Activated naive CD4-positive, alpha-beta T cell treated with anti-CD3 and anti-CD28 coated beads, Interleukin-2, amount 10 ng/mL, durations not matched to agents 7 days and 5 days (primary cell): ENCODE measurements at regions of chr1 and their contacts with region 1.

Region 1: GRCh38 chr1:234212764-234213657 is 160.2 kb upstream of the COA6 start:
- DNase-seq: peak; percentile 53
- H3K4me3 Mint-ChIP-seq: peak overlapping the region; percentile 81
- H3K27ac Mint-ChIP-seq: peak overlapping the region; percentile 77
- H3K4me1 Mint-ChIP-seq: peaks cover 43% of the 10 kb centered on the region
- H3K27me3 Mint-ChIP-seq: peaks cover 43% of the 10 kb centered on the region

Region 2: DNA sequence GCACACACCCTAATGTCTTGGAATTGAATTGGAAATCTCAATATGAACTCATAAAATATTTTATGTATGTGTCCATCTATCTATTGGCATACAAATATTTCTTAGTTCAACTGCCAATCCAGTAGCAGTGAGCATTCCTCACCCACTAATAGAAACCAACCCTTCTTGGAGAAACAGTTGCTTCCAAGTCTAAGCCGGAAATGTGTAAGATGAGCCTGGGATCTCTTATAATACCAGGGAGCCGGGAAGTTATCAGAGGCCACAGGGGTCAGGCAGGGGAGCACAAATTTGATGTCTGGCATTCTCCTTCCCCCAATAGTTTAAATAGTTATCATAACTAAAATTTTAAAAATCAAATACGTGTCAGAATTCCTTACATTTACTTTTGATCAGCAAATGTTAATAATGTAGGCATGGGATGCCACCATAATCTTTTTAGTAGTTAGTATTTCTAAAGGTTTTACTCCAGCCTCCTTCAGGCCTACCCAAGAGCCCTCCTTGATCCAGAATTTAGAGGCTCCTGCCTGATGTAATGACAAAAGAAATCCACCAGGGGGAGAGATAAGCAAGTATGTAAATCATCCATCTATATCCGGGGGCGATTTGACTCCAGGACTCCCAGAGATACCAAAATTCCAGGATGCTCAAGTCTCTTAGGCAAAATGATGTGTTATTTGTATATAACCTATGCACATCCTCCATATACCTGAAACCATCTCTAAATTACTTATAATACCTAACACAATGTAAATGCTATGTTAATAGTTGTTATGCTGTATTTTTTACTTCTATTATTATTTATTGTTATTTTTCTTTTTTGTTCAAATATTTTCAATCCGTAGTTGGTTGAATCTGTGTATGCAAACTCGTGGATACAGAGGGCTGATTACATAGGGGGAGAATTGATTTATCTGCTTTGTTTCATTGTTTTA is 58.4 kb before region 1 on chr1:
- CTCF ChIA-PET with region 1: interaction called, 13 read pairs
- DNase-seq: peak; percentile 32
- H3K4me3 Mint-ChIP-seq: no peak overlapping the region
- H3K27ac Mint-ChIP-seq: no peak overlapping the region
- H3K4me1 Mint-ChIP-seq: no peaks in the 10 kb centered on the region
- H3K27me3 Mint-ChIP-seq: peaks cover 18% of the 10 kb centered on the region

Region 3: GRCh38 chr1:234201600-234201999 is 11.4 kb before region 1 on chr1:
- CTCF ChIA-PET with region 1: interaction called, 10 read pairs
- DNase-seq: no peak
- H3K4me3 Mint-ChIP-seq: no peak overlapping the region
- H3K27ac Mint-ChIP-seq: no peak overlapping the region
- H3K4me1 Mint-ChIP-seq: peaks cover 9% of the 10 kb centered on the region
- H3K27me3 Mint-ChIP-seq: peaks cover 78% of the 10 kb centered on the region

Region 4: DNA sequence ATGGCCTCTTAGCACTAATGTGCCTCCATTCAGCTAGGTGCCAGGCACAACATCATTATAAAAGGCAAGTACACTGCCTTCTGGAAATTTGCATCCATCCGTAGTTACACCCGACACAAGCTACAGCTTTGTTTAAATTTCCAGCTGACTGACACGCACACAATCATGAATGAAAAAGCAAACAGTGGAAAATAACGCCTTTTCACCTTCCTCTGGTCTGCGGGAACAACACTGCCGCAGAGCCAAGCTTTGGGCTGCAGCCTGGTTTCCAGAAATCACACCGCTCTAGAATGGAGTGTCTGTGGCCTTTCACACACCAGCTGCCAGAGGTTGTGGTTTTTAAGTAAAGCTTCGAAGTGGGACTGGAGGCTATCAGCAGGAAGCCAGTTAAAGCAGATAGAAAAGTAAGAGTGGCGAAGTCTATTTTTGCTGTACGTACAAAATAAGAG is 17.4 kb after region 1 on chr1:
- CTCF ChIA-PET with region 1: interaction called, 38 read pairs
- DNase-seq: peak; percentile 57
- H3K4me3 Mint-ChIP-seq: peak overlapping the region; percentile 61
- H3K27ac Mint-ChIP-seq: peak overlapping the region; percentile 83
- H3K4me1 Mint-ChIP-seq: peaks cover 25% of the 10 kb centered on the region
- H3K27me3 Mint-ChIP-seq: peaks cover 11% of the 10 kb centered on the region

Region 5: GRCh38 chr1:234326497-234327366 is 113.7 kb after region 1 on chr1:
- CTCF ChIA-PET with region 1: interaction called, 24 read pairs
- DNase-seq: peak; percentile 78
- H3K4me3 Mint-ChIP-seq: peak overlapping the region; percentile 75
- H3K27ac Mint-ChIP-seq: peak overlapping the region; percentile 58
- H3K4me1 Mint-ChIP-seq: peaks cover 29% of the 10 kb centered on the region
- H3K27me3 Mint-ChIP-seq: peaks cover 29% of the 10 kb centered on the region